AG04450 (cell line): ENCODE measurements at regions of chr19 and their contacts with region 1.

Region 1: GRCh38 chr19:39341719-39342604 is at the start of gene SAMD4B:
- DNase-seq: peak; percentile 97
- H3K4me3 ChIP-seq: peak within 1 kb of the TSS; percentile 80
- H3K27ac ChIP-seq: peak within 1 kb of the TSS; percentile 52
- H3K27me3 ChIP-seq: no peaks in the 10 kb centered on the region
- CTCF ChIP-seq: peak; percentile 65
- polyA plus RNA-seq, gene SAMD4B: 33.4 and 47.3 TPM in 2 replicates

Region 2: GRCh38 chr19:39246951-39247669 is 94.9 kb before region 1 on chr19:
- CTCF ChIA-PET with region 1: no interaction called
- POLR2A ChIA-PET with region 1: no interaction called
- DNase-seq: no peak
- H3K4me3 ChIP-seq: no peak overlapping the region
- H3K27ac ChIP-seq: no peak overlapping the region
- H3K27me3 ChIP-seq: peaks cover 39% of the 10 kb centered on the region
- CTCF ChIP-seq: no peak

Region 3: GRCh38 chr19:39352381-39353255 is 10.7 kb after region 1 on chr19:
- CTCF ChIA-PET with region 1: interaction called, 17 read pairs
- POLR2A ChIA-PET with region 1: interaction called, 3 read pairs
- DNase-seq: no peak
- H3K4me3 ChIP-seq: no peak overlapping the region
- H3K27ac ChIP-seq: no peak overlapping the region
- H3K27me3 ChIP-seq: no peaks in the 10 kb centered on the region
- CTCF ChIP-seq: no peak

Region 4: GRCh38 chr19:39362682-39363657 is 21.0 kb after region 1 on chr19:
- CTCF ChIA-PET with region 1: interaction called, 12 read pairs
- POLR2A ChIA-PET with region 1: no interaction called
- DNase-seq: no peak
- H3K4me3 ChIP-seq: no peak overlapping the region
- H3K27ac ChIP-seq: peak overlapping the region; percentile 86
- H3K27me3 ChIP-seq: no peaks in the 10 kb centered on the region
- CTCF ChIP-seq: no peak